ENCODE measurements at regions of chr5 and their contacts with region 1.

Region 1: GRCh38 chr5:145697251-145697990 is 137.7 kb downstream of the PRELID2 start:
- DNase-seq: peak; percentile 68
- H3K4me3 Mint-ChIP-seq: no peak overlapping the region
- H3K27ac Mint-ChIP-seq: no peak overlapping the region
- H3K4me1 Mint-ChIP-seq: no peaks in the 10 kb centered on the region
- H3K27me3 Mint-ChIP-seq: no peaks in the 10 kb centered on the region

Region 2: GRCh38 chr5:145825751-145826180 is 128.3 kb after region 1 on chr5:
- intact Hi-C with region 1: loop called (anchors 1 kb)
- DNase-seq: peak; percentile 65
- H3K4me3 Mint-ChIP-seq: no peak overlapping the region
- H3K27ac Mint-ChIP-seq: no peak overlapping the region
- H3K4me1 Mint-ChIP-seq: peaks cover 7% of the 10 kb centered on the region
- H3K27me3 Mint-ChIP-seq: no peaks in the 10 kb centered on the region

Region 3: GRCh38 chr5:146426853-146427618 is 729.6 kb after region 1 on chr5:
- intact Hi-C with region 1: loop called (anchors 5 kb)
- DNase-seq: peak; percentile 63
- H3K4me3 Mint-ChIP-seq: no peak overlapping the region
- H3K27ac Mint-ChIP-seq: no peak overlapping the region
- H3K4me1 Mint-ChIP-seq: peaks cover 6% of the 10 kb centered on the region
- H3K27me3 Mint-ChIP-seq: peaks cover 9% of the 10 kb centered on the region